ENCODE measurements at regions of chr15 and their contacts with region 1.

Region 1: DNA sequence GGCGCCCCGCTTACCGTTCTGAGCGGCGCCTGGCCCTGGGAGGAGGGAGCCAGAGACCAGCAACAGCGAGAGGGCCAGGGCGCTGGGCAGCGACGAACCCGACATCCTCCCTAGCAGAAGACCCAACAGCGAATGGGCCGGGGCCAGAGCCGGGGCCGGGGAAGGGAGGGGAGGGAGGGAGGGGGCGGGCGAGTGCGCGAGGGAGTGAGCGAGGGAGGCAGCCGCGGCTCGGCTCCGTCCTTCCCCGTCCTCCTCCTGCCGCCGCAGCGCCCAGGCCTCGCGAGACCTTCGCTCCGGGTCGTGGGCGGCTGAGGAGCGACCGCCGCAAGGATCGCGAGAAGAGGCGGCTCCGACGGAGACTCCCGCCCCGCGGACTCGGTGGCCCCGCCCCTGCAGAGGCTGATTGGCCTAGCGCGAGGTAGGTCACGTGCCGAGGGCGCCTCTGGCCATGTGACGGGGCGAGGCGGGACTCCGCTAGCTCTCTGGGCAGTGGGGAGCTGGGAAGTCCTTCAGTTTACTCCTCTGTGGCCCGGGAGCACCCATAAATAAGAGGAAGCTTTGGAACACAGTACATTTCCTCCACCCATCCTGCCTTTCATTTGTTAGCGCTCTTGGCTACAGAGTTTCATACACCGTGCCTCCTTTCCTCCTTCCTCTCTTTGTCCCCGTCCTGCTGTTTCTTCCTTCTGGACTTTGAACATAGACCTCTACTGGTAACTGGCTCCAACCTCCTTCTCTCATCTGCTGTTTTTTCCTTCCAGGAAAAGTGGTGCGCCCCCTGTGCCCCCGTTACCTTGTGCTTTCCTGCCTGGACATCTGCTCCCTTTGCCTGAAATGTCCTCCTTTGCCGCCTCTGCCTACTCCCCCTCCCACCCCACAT is at the start of gene NPTN:
- DNase-seq: peak; percentile 93
- H3K4me3 ChIP-seq: peak within 1 kb of the TSS; percentile 64
- H3K27ac ChIP-seq: peak within 1 kb of the TSS; percentile 91
- H3K27me3 ChIP-seq: peaks cover 2% of the 10 kb centered on the region
- CTCF ChIP-seq: peak; percentile 16; the same call in 1 of the 2 replicates
- polyA plus RNA-seq, gene NPTN: 195 and 197 TPM in 2 replicates

Region 2: GRCh38 chr15:73530649-73531048 is 102.7 kb before region 1 on chr15:
- CTCF ChIA-PET with region 1: interaction called, 11 read pairs
- POLR2A ChIA-PET with region 1: no interaction called
- DNase-seq: no peak
- H3K4me3 ChIP-seq: no peak overlapping the region
- H3K27ac ChIP-seq: no peak overlapping the region
- H3K27me3 ChIP-seq: no peaks in the 10 kb centered on the region
- CTCF ChIP-seq: no peak

Region 3: GRCh38 chr15:73573572-73573971 is 59.8 kb before region 1 on chr15:
- CTCF ChIA-PET with region 1: interaction called, 18 read pairs
- POLR2A ChIA-PET with region 1: interaction called, 5 read pairs
- DNase-seq: peak; percentile 82
- H3K4me3 ChIP-seq: no peak overlapping the region
- H3K27ac ChIP-seq: peak overlapping the region; percentile 66
- H3K27me3 ChIP-seq: no peaks in the 10 kb centered on the region
- CTCF ChIP-seq: no peak

Region 4: GRCh38 chr15:73608941-73609340 is 24.4 kb before region 1 on chr15:
- CTCF ChIA-PET with region 1: interaction called, 69 read pairs
- POLR2A ChIA-PET with region 1: interaction called, 3 read pairs
- DNase-seq: no peak
- H3K4me3 ChIP-seq: no peak overlapping the region
- H3K27ac ChIP-seq: peak overlapping the region; percentile 54
- H3K27me3 ChIP-seq: no peaks in the 10 kb centered on the region
- CTCF ChIP-seq: no peak

Region 5: DNA sequence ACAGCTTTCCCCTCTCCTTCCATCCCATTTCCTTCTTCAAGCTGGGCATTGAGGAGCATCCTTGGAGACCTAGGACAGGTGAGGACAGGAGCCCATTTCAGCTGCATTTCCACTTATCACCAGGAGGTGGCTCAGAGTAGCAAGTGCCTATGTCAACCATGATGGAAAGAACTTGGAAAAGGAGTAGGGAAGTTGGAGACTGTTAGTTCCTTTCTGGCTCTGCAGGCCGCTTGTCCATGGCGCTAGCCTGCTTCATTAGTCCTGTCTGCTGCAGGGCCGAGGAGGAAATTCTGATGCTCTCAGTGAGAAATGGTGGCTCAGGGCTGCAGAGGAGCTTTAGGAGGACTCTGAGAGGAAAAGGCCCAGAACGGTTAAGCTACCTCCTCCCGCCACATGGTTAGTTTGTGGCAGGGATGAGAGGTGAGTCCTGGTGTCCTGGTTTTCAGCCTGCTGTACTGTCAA is 43.8 kb after region 1 on chr15:
- CTCF ChIA-PET with region 1: interaction called, 97 read pairs
- POLR2A ChIA-PET with region 1: no interaction called
- DNase-seq: no peak
- H3K4me3 ChIP-seq: no peak overlapping the region
- H3K27ac ChIP-seq: no peak overlapping the region
- H3K27me3 ChIP-seq: peaks cover 27% of the 10 kb centered on the region
- CTCF ChIP-seq: peak; percentile 86

Region 6: GRCh38 chr15:73996939-73997338 is 363.6 kb after region 1 on chr15:
- CTCF ChIA-PET with region 1: no interaction called
- POLR2A ChIA-PET with region 1: no interaction called
- DNase-seq: no peak
- H3K4me3 ChIP-seq: peak overlapping the region; percentile 46
- H3K27ac ChIP-seq: no peak overlapping the region
- H3K27me3 ChIP-seq: no peaks in the 10 kb centered on the region
- CTCF ChIP-seq: no peak